ENCODE measurements at regions of chr1 and their contacts with region 1.

Region 1: GRCh38 chr1:23916209-23917131 is 3.3 kb upstream of the CNR2 start:
- DNase-seq: peak; percentile 53
- ATAC-seq: peak; percentile 90
- H3K4me3 ChIP-seq: no peak overlapping the region
- H3K27ac ChIP-seq: peak overlapping the region; percentile 71
- H3K4me1 ChIP-seq: peaks cover 31% of the 10 kb centered on the region
- H3K27me3 ChIP-seq: no peaks in the 10 kb centered on the region
- CTCF ChIP-seq: peak; percentile 86 to 94 (median 88)
- EP300 ChIP-seq: no peak
- POLR2A ChIP-seq: no peak
- RAD21 ChIP-seq: peak; percentile 96

Region 2: GRCh38 chr1:23436520-23437354 is 479.7 kb before region 1 on chr1:
- CTCF ChIA-PET with region 1: no interaction called
- POLR2A ChIA-PET with region 1: no interaction called
- RAD21 ChIA-PET with region 1: no interaction called
- SMC1A ChIA-PET with region 1: no interaction called
- in situ Hi-C with region 1: no loop called
- intact Hi-C with region 1: no loop called
- DNase-seq: no peak
- ATAC-seq: no peak
- H3K4me3 ChIP-seq: no peak overlapping the region
- H3K27ac ChIP-seq: no peak overlapping the region
- H3K4me1 ChIP-seq: no peaks in the 10 kb centered on the region
- H3K27me3 ChIP-seq: peaks cover 2% of the 10 kb centered on the region in 2 experiments; a peak in 1 of 4 replicates
- CTCF ChIP-seq: no peak
- EP300 ChIP-seq: no peak
- POLR2A ChIP-seq: no peak
- RAD21 ChIP-seq: no peak

Region 3: GRCh38 chr1:23777979-23778814 is 138.3 kb before region 1 on chr1 and contains the start of gene PITHD1:
- CTCF ChIA-PET with region 1: interaction called, 59 read pairs
- POLR2A ChIA-PET with region 1: interaction called, 6 read pairs
- RAD21 ChIA-PET with region 1: interaction called, 27 read pairs
- SMC1A ChIA-PET with region 1: interaction called, 20 read pairs
- in situ Hi-C with region 1: loop called (anchors 5 kb)
- intact Hi-C with region 1: no loop called
- DNase-seq: peak; percentile 45
- ATAC-seq: peak; percentile 96
- H3K4me3 ChIP-seq: peak within 1 kb of the TSS; percentile 99
- H3K27ac ChIP-seq: peak within 1 kb of the TSS; percentile 82
- H3K4me1 ChIP-seq: peaks cover 10% of the 10 kb centered on the region; the same call in 1 of the 2 replicates
- H3K27me3 ChIP-seq: no peaks in the 10 kb centered on the region
- CTCF ChIP-seq: no peak
- EP300 ChIP-seq: no peak
- POLR2A ChIP-seq: peak; percentile 98
- RAD21 ChIP-seq: no peak
- polyA plus RNA-seq, gene PITHD1: 23.7 to 43.3 TPM

Region 4: GRCh38 chr1:23816906-23817305 is 99.6 kb before region 1 on chr1:
- CTCF ChIA-PET with region 1: interaction called, 220 read pairs
- POLR2A ChIA-PET with region 1: interaction called, 4 read pairs
- RAD21 ChIA-PET with region 1: interaction called, 175 read pairs
- SMC1A ChIA-PET with region 1: interaction called, 117 read pairs
- in situ Hi-C with region 1: no loop called
- intact Hi-C with region 1: no loop called
- DNase-seq: no peak
- ATAC-seq: peak; percentile 61
- H3K4me3 ChIP-seq: no peak overlapping the region
- H3K27ac ChIP-seq: no peak overlapping the region; the same call in 1 of the 2 replicates
- H3K4me1 ChIP-seq: peaks cover 13% of the 10 kb centered on the region
- H3K27me3 ChIP-seq: no peaks in the 10 kb centered on the region
- CTCF ChIP-seq: no peak
- EP300 ChIP-seq: no peak
- POLR2A ChIP-seq: no peak
- RAD21 ChIP-seq: no peak

Region 5: DNA sequence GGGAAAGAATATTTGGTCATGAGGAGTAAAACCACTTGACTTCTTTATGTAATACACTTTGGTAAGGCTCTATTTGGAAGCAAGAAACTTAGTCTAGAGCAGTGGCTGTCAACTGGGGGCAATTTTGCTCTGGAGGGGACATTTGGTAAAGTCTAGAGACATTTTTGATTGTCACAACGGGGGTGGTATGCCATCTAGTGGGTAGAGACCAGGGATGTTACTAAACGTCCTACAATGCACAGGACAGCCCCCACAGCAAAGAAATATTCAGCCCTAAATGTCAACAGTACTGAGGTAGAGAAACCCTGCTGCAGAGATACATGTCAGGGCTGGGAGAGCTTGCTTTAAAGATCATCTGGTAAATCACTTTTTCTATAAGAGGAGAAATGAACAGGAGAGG is 61.9 kb before region 1 on chr1:
- CTCF ChIA-PET with region 1: interaction called, 24 read pairs
- POLR2A ChIA-PET with region 1: interaction called, 3 read pairs
- RAD21 ChIA-PET with region 1: interaction called, 7 read pairs
- SMC1A ChIA-PET with region 1: interaction called, 13 read pairs
- in situ Hi-C with region 1: no loop called
- intact Hi-C with region 1: no loop called
- DNase-seq: no peak
- ATAC-seq: peak; percentile 68
- H3K4me3 ChIP-seq: no peak overlapping the region
- H3K27ac ChIP-seq: no peak overlapping the region
- H3K4me1 ChIP-seq: no peaks in the 10 kb centered on the region
- H3K27me3 ChIP-seq: no peaks in the 10 kb centered on the region
- CTCF ChIP-seq: peak in 2 of 3 experiments; percentile 20 to 45; a peak in 3 of 6 replicates
- EP300 ChIP-seq: no peak
- POLR2A ChIP-seq: no peak
- RAD21 ChIP-seq: peak; percentile 35

Region 6: GRCh38 chr1:23889074-23889473 is 27.4 kb before region 1 on chr1:
- CTCF ChIA-PET with region 1: interaction called, 13 read pairs
- POLR2A ChIA-PET with region 1: interaction called, 26 read pairs
- RAD21 ChIA-PET with region 1: interaction called, 40 read pairs
- SMC1A ChIA-PET with region 1: interaction called, 46 read pairs
- in situ Hi-C with region 1: no loop called
- intact Hi-C with region 1: no loop called
- DNase-seq: peak; percentile 50
- ATAC-seq: peak; percentile 92
- H3K4me3 ChIP-seq: peak overlapping the region; percentile 45; the same call in 1 of the 2 replicates
- H3K27ac ChIP-seq: peak overlapping the region; percentile 85
- H3K4me1 ChIP-seq: peaks cover 46% of the 10 kb centered on the region
- H3K27me3 ChIP-seq: no peaks in the 10 kb centered on the region
- CTCF ChIP-seq: no peak
- EP300 ChIP-seq: no peak
- POLR2A ChIP-seq: 0 out of 2 replicates have a peak, but pooled peaks have one; percentile 16
- RAD21 ChIP-seq: no peak

Region 7: DNA sequence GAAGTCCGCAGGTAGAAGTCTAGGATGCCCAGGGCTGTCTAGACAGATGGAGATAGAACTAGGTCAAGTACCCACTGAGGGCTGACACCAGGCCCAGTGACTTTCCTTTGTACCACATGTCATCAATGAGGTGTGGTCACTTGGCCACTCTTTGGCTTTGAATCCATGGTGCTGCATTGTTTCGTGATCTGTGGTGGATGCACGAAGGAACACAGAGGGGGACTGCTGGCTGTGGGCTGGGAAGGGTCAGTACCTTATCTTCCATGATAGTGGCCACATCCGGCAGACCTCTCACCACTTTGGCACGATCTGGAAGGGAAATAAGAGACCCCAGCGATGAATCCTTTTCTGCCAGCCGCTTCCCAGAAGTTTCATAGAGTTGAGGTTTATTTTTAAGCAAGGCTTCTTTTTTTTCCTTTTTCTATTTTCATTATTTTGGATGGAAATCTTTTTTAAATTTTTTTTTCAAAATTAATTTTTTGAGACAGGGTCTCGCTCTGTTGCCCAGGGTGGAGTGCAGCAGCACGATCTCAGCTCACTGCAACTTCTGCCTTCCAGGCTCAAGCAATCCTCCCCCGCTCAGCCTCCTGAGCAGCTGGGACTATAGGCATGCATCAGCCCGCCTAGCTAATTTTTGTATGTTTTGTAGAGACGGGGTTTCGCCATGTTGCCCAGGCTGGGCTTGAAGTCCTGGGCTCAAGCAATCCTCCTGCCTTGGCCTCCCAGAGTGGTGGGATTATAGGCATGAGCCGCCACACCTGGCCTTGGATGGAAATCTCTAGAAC is 142.4 kb after region 1 on chr1:
- CTCF ChIA-PET with region 1: no interaction called
- POLR2A ChIA-PET with region 1: no interaction called
- RAD21 ChIA-PET with region 1: no interaction called
- SMC1A ChIA-PET with region 1: no interaction called
- in situ Hi-C with region 1: no loop called
- intact Hi-C with region 1: no loop called
- DNase-seq: no peak
- ATAC-seq: no peak
- H3K4me3 ChIP-seq: no peak overlapping the region
- H3K27ac ChIP-seq: no peak overlapping the region
- H3K4me1 ChIP-seq: no peaks in the 10 kb centered on the region
- H3K27me3 ChIP-seq: no peaks in the 10 kb centered on the region; a peak in 2 of 4 replicates
- CTCF ChIP-seq: no peak
- EP300 ChIP-seq: no peak
- POLR2A ChIP-seq: no peak
- RAD21 ChIP-seq: no peak